Endothelial cell of umbilical vein (primary cell): ENCODE measurements at regions of chr1 and their contacts with region 1.

Region 1: GRCh38 chr1:94025383-94026340 is 95.3 kb downstream of the ABCA4 start:
- DNase-seq: peak; percentile 83
- H3K4me3 ChIP-seq: no peak overlapping the region
- H3K27ac ChIP-seq: no peak overlapping the region
- H3K4me1 ChIP-seq: peaks cover 25% of the 10 kb centered on the region
- H3K27me3 ChIP-seq: no peaks in the 10 kb centered on the region
- CTCF ChIP-seq: peak; percentile 53 to 73
- POLR2A ChIP-seq: no peak

Region 2: GRCh38 chr1:94081566-94082344 is 56.1 kb after region 1 on chr1:
- CTCF ChIA-PET with region 1: no interaction called
- POLR2A ChIA-PET with region 1: no interaction called
- dilution Hi-C with region 1: no loop called
- intact Hi-C with region 1: no loop called
- DNase-seq: no peak
- H3K4me3 ChIP-seq: no peak overlapping the region
- H3K27ac ChIP-seq: no peak overlapping the region
- H3K4me1 ChIP-seq: peaks cover 7% of the 10 kb centered on the region
- H3K27me3 ChIP-seq: no peaks in the 10 kb centered on the region
- CTCF ChIP-seq: no peak
- POLR2A ChIP-seq: no peak

Region 3: DNA sequence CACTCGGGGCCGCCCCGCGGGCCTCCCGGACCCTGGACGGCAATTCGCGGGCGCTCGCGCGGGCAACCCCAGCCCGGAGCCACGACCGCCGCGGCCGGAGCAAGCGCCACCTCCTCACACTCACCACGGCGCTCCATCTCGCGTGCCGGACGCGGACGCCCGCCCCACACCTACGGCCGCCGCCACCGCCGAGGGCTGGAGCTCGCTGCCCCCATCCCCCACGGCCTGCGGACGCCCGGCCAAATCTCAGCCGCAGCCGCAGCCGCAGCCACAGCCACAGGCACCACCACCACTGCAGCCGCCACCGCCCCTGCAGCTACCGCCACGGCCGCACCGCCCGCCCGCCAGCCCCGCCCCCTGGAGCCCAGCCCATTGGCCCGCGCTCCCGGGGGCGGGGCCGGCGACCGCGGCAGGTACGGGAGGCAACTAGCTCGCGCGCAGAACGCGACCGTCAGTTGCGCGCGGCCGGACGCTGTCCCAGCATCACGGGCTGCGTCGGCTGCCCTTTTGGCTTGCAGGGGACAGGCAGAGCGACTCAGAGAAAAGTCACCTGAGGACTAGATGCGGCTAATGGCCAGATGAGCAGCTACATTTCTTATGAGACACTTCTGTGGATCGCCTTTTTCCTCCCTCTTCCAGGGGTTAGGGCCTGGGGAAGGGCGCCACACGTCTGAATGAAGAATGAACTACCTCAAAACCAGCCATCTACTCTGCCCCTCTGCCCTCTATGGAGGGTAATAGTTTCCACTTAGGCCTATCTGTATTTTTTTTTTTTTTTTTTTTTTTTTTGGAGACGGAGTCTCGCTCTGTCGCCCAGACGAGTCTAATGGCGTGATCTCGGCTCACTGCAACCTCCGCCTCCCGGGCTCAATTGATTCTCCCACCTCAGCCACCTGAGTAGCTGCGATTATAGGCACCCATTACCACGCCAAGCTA is 211.9 kb after region 1 on chr1 and contains the start of gene ARHGAP29:
- CTCF ChIA-PET with region 1: interaction called, 9 read pairs
- POLR2A ChIA-PET with region 1: no interaction called
- dilution Hi-C with region 1: no loop called
- intact Hi-C with region 1: loop called (anchors 1 kb)
- DNase-seq: peak; percentile 86
- H3K4me3 ChIP-seq: peak within 1 kb of the TSS; percentile 88 to 100 (median 95)
- H3K27ac ChIP-seq: peak within 1 kb of the TSS; percentile 93
- H3K4me1 ChIP-seq: peaks cover 67% of the 10 kb centered on the region
- H3K27me3 ChIP-seq: no peaks in the 10 kb centered on the region
- CTCF ChIP-seq: no peak
- POLR2A ChIP-seq: peak; percentile 83
- total RNA-seq, gene ARHGAP29: 199 and 215 TPM in 2 replicates

Region 4: DNA sequence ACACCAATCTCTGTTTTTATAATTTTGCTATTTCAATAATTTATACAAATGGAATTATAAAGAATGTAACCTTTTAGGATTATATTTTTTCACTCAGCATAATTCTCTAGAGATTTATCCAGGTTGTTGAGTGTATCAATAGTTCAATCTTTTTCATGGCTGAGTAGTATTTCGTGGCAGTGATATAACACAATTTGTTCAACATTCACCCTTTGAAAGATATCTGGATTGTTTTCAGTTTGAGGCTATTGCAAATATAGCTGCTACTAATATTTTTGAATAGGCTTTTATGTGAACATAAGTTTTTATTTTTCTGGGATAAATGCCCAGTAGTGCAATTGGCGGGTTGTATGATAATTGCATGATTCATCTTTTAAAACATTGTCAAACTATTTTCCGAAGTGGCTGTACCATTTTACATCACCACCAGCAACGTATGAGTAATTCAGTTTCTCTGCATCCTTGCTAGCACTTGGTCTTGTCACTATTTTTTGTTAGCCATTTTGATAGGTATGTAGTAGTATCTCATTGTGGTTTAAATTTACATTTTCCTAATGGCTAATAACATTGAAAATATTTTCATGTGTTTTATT is 336.9 kb after region 1 on chr1:
- CTCF ChIA-PET with region 1: no interaction called
- POLR2A ChIA-PET with region 1: no interaction called
- dilution Hi-C with region 1: loop called (anchors 25 kb)
- intact Hi-C with region 1: no loop called
- DNase-seq: no peak
- H3K4me3 ChIP-seq: no peak overlapping the region
- H3K27ac ChIP-seq: no peak overlapping the region
- H3K4me1 ChIP-seq: no peaks in the 10 kb centered on the region
- H3K27me3 ChIP-seq: peaks cover 12 to 15% of the 10 kb centered on the region in 2 experiments
- CTCF ChIP-seq: no peak
- POLR2A ChIP-seq: no peak

Region 5: DNA sequence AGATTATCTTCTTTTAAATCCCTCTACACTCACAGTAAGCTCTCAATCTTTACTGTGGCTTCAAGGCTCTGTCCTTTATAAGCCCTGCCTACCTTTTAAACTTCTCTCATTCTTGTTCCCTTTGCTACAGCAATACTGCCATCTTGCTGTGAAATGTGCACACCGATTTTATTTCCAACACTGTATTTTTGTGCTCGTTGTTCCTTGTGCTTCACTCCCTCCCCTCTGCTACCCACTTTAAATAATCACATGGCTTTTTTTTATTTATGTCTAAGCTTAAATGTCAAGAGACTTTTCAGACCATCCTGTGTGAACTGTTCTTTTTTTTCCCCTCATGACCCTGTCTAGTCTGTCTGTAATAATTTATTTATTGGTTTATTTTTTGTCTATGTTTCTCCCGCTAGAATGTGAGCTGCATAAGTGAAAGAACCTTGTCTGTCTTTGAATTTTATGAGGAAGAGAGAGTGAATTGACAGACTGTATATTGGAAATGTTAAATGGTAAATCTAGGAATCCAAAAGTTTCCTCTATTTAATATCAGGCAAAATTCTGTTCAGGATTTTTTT is 438.2 kb after region 1 on chr1:
- CTCF ChIA-PET with region 1: interaction called, 37 read pairs
- POLR2A ChIA-PET with region 1: no interaction called
- dilution Hi-C with region 1: no loop called
- intact Hi-C with region 1: loop called (anchors 2 kb)
- DNase-seq: peak; percentile 74
- H3K4me3 ChIP-seq: no peak overlapping the region
- H3K27ac ChIP-seq: no peak overlapping the region
- H3K4me1 ChIP-seq: no peaks in the 10 kb centered on the region
- H3K27me3 ChIP-seq: no peaks in the 10 kb centered on the region
- CTCF ChIP-seq: peak in 1 of 2 donors; percentile 47
- POLR2A ChIP-seq: no peak